Cardiac septum (tissue), 1 donor: ENCODE measurements at regions of chr4 and their contacts with region 1.

Region 1: GRCh38 chr4:98260579-98261290 is 449 bp upstream of the RAP1GDS1 start:
- DNase-seq: peak; percentile 97

Region 2: GRCh38 chr4:98081961-98082360 is 178.8 kb before region 1 on chr4:
- intact Hi-C with region 1: no loop called
- DNase-seq: no peak

Region 3: DNA sequence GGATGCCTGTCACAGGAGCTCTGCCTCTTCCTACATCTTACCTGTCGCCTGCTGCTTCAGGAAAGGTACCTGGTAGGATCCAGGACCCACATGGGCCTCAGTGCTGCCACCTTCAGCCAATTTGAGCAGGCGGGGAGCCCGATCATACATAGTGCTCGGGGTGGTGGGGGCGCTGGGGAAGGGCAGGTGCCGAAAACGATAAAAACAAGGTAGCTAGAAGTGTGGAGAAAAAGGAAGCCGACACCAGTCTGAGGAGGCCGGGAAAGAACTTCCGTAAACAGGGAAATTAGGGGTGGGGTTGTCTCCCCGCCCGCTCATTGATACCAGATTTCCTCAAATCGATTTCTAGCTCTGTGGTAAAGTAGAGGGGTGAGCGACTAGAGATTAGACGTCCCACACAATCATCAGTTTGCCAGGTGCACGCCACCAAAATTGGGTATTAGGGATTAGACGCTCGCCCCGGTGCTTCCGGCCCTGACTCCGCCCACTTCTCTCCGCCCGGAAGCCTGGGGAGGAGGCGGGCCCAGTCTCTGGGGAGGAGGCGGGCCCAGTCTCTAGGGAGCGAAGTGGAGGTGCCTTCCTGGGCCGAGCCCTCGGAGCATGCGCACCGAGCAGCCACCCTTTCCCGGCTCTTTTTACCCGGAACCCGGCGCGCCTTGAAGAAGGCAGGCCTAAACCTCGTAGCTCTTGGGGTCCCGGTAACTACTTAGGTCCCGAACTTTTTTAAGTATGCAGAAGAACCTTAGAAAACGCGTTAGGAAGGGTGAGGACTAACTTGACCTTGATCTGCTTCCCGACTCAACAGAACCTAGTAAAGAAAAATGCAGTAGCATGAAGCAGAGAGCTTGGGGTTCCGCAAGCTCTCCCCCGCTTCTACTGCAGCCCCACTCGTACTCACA is 117.5 kb before region 1 on chr4 and contains the start of gene STPG2:
- intact Hi-C with region 1: loop called (anchors 5 kb)
- DNase-seq: peak; percentile 96
- total RNA-seq, gene STPG2: 0.19 TPM

Region 4: GRCh38 chr4:98203332-98204235 is 57.2 kb before region 1 on chr4:
- intact Hi-C with region 1: no loop called
- DNase-seq: no peak

Region 5: DNA sequence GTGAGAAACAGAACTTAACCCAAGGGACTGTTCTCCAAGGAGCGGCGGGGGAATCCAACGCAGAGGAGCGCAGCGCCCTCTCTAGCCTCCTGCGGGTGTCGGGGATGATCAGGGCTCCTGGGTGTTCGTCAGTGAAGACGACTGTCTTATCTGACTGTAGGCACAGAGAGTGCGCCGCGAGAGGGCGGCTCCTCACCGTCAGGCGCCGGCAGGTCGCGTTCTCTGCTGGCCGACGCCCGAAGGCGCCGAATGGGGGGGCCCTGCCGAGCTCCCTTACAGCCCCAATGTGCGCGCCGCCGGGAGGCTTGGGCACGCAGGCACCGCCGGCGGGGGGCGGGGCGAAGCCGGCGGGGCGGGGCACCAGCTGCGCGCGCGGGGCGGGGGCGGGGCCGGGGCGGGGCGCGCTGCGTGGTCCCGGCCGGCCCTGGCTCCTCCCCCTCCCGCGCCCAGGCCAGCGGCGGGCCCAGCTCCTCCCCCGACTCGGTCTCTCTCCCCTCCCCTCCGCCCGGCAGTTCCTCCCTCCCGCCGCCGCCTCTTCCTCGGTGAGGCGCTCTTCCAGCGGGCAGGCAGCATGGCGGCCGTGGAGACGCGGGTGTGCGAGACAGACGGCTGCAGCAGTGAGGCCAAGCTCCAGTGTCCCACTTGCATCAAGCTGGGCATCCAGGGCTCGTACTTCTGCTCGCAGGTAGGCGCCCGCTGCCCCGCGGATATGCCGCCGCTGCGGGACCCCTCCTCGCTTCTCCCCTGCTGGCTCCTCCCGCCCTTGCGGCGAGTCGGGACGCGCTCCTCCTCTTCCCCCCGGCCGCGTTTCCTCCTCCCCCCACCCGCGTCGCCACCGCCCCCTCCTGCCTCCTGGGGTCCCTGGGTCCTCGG is 734.7 kb after region 1 on chr4 and contains the start of gene METAP1:
- intact Hi-C with region 1: loop called (anchors 5 kb)
- DNase-seq: peak; percentile 97
- total RNA-seq, gene METAP1: 56.2 TPM